AG04450 (cell line): ENCODE measurements at regions of chr13 and their contacts with region 1.

Region 1: GRCh38 chr13:111474136-111475002 is 153.9 kb downstream of the TEX29 start:
- DNase-seq: peak; percentile 2
- H3K4me3 ChIP-seq: no peak overlapping the region
- H3K27ac ChIP-seq: no peak overlapping the region
- H3K27me3 ChIP-seq: peaks cover 4% of the 10 kb centered on the region
- CTCF ChIP-seq: peak; percentile 55

Region 2: DNA sequence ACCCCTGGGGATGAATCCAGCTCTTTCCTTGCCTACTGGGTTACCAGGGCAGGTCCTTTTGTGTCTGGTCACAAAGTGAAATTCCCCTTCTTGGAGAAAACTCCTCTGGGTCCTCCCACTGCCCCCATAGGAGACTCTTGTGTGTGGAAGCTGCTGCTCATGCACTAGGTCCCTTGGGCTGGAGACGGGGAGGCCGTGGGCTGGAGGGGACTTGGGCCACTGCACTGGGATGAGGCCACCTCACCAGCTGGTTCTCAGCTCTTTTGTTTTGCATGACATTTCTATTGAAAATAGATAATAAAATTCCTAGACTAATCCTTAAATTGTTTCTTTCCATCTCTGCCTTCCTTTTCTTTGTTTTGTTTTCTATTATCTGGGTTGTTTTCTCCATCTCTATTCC is 91.5 kb before region 1 on chr13:
- CTCF ChIA-PET with region 1: no interaction called
- POLR2A ChIA-PET with region 1: no interaction called
- DNase-seq: no peak
- H3K4me3 ChIP-seq: no peak overlapping the region
- H3K27ac ChIP-seq: no peak overlapping the region
- H3K27me3 ChIP-seq: no peaks in the 10 kb centered on the region
- CTCF ChIP-seq: no peak

Region 3: GRCh38 chr13:111491021-111491420 is 16.7 kb after region 1 on chr13:
- CTCF ChIA-PET with region 1: no interaction called
- POLR2A ChIA-PET with region 1: no interaction called
- DNase-seq: no peak
- H3K4me3 ChIP-seq: no peak overlapping the region
- H3K27ac ChIP-seq: no peak overlapping the region
- H3K27me3 ChIP-seq: no peaks in the 10 kb centered on the region
- CTCF ChIP-seq: no peak

Region 4: GRCh38 chr13:112443995-112444860 is 969.9 kb after region 1 on chr13:
- CTCF ChIA-PET with region 1: interaction called, 63 read pairs
- POLR2A ChIA-PET with region 1: no interaction called
- DNase-seq: no peak
- H3K4me3 ChIP-seq: no peak overlapping the region
- H3K27ac ChIP-seq: no peak overlapping the region
- H3K27me3 ChIP-seq: peaks cover 7% of the 10 kb centered on the region
- CTCF ChIP-seq: peak; percentile 89